ENCODE measurements at regions of chr10 and their contacts with region 1.

Region 1: DNA sequence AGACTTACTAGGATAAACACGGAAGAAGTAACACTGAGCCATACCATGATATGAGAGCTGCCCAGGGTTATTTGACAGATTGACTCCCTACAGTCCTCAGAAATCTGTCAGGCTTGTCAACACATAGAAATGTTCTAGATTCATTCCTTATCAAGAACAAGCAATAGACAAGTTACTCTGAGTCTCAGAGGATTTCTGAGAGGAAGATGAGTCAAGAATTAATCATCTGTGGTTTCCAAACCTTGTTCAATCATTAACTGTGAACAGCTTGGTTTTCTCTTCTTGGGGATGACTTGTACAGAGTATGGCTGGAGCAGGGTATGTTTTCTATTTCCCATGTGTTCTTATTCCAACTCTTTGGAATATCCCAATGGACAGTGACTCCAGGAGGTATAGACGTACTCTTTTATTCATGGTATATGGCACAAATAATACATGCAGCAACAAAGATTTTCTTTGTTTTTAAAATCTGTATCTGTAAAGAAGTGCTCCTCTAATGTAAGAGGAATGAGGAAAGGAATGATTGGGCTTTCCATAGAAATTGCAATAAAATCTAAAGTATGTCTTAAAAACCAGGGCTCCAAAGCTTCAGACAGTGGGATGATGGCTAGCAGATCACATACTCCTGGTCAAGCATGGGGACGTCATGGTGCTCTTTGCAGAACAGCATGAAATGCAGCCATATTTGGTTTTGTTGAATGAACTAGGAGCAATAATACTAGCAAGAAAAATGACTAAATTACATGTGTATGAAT is 11.9 kb upstream of the SFR1 start:
- DNase-seq: no peak
- ATAC-seq: peak in 2 of 4 experiments; percentile 36 to 45
- H3K4me3 ChIP-seq: no peak overlapping the region
- H3K4me3 Mint-ChIP-seq: no peak overlapping the region
- H3K27ac ChIP-seq: no peak overlapping the region
- H3K27ac Mint-ChIP-seq: no peak overlapping the region
- H3K4me1 ChIP-seq: no peaks in the 10 kb centered on the region
- H3K4me1 Mint-ChIP-seq: peaks cover 0 to 8% (median 6%) of the 10 kb centered on the region in 3 donors
- H3K27me3 ChIP-seq: peaks cover 0 to 6% of the 10 kb centered on the region in 2 experiments
- H3K27me3 Mint-ChIP-seq: peaks cover 7 to 11% of the 10 kb centered on the region in 2 donors

Region 2: GRCh38 chr10:103966671-103967447 is 143.2 kb before region 1 on chr10 and contains the start of gene SLK:
- CTCF ChIA-PET with region 1: no interaction called
- POLR2A ChIA-PET with region 1: interaction called in 1 of 2 experiments, 10 read pairs
- DNase-seq: peak; percentile 64 to 94 (median 76)
- ATAC-seq: peak; percentile 85 to 92 (median 90)
- H3K4me3 ChIP-seq: peak within 1 kb of the TSS; percentile 89 to 90
- H3K4me3 Mint-ChIP-seq: peak within 1 kb of the TSS; percentile 93 to 97 (median 95)
- H3K27ac ChIP-seq: peak within 1 kb of the TSS; percentile 82
- H3K27ac Mint-ChIP-seq: peak within 1 kb of the TSS; percentile 92 to 93
- H3K4me1 ChIP-seq: peaks cover 20 to 26% of the 10 kb centered on the region in 2 experiments
- H3K4me1 Mint-ChIP-seq: peaks cover 38 to 48% (median 40%) of the 10 kb centered on the region in 3 donors
- H3K27me3 ChIP-seq: no peaks in the 10 kb centered on the region
- H3K27me3 Mint-ChIP-seq: no peaks in the 10 kb centered on the region
- total RNA-seq, gene SLK: 20.9 to 30.4 (median 27.3) TPM

Region 3: GRCh38 chr10:104067525-104067924 is 42.6 kb before region 1 on chr10:
- CTCF ChIA-PET with region 1: no interaction called
- POLR2A ChIA-PET with region 1: interaction called in 1 of 2 experiments, 10 read pairs
- DNase-seq: no peak
- ATAC-seq: no peak
- H3K4me3 ChIP-seq: no peak overlapping the region
- H3K4me3 Mint-ChIP-seq: no peak overlapping the region
- H3K27ac ChIP-seq: no peak overlapping the region
- H3K27ac Mint-ChIP-seq: no peak overlapping the region
- H3K4me1 ChIP-seq: no peaks in the 10 kb centered on the region
- H3K4me1 Mint-ChIP-seq: peaks cover 0 to 2% (median 0%) of the 10 kb centered on the region in 3 donors
- H3K27me3 ChIP-seq: peaks cover 0 to 3% of the 10 kb centered on the region in 2 experiments
- H3K27me3 Mint-ChIP-seq: peaks cover 0 to 4% of the 10 kb centered on the region in 2 donors